Cardiac septum (tissue), 1 donor: ENCODE measurements at regions of chr19 and their contacts with region 1.

Region 1: DNA sequence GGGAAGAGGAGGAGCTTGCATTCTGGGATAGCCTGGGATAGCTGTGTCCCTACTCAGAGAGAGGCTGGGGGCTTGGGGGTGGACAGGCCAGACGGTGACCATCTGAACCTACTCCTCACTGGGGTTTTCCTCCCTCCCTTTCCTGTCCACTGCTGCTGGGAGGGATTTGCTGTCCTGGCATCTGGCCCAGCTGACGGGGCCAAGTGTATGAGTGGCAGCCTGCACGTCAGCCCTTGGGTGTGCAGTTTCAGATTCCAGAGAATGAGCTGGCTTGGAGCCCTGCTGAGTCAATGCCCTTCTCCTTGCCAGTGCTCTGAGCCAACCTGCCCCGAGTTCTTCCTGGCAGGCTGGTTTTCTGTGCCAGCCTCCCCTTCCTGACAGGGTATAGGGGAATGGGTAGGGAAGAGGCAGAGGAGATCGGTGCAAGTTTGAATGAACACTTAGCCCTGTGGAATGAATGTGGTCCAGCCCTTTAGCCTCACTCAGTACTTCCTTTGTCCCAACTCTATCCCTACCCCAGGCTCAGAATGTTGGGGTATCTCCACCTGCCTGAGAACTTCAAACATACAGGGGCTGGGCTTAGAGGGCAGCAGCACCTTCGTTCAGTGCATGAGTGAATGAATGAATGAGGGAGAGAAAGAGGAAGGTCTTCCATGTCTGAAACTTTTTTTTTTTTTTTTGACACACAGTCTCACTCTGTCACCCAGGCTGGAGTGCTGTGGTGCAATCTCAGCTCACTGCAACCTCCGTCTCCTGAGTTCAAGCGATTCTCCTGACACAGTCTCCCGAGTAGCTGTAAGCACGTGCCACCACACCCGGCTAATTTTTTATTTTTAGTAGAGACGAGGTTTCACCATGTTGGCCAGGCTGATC is 1.8 kb upstream of the ANGPTL4 start:
- DNase-seq: peak; percentile 94

Region 2: GRCh38 chr19:8240274-8241229 is 121.6 kb before region 1 on chr19:
- intact Hi-C with region 1: no loop called
- DNase-seq: peak; percentile 92

Region 3: DNA sequence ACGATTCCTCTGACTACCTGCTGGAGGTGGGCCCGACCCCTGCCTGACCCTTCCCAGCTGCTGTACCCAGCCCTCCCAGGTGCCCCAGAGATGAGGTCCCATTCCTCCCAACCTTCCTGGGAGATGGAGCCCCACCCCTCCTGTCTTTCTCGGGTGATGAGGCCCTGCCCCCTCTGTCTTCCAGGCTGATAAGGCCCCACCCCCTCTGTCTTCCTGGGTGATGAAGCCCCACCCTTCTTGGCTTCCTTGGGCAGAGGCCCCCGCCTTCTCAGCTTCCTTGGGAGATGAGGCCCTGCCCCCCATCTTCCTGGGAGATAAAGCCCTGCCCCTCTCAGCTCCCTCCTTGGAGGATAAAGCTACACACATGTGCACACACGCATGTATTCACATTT is 105.1 kb before region 1 on chr19:
- intact Hi-C with region 1: no loop called
- DNase-seq: no peak

Region 4: DNA sequence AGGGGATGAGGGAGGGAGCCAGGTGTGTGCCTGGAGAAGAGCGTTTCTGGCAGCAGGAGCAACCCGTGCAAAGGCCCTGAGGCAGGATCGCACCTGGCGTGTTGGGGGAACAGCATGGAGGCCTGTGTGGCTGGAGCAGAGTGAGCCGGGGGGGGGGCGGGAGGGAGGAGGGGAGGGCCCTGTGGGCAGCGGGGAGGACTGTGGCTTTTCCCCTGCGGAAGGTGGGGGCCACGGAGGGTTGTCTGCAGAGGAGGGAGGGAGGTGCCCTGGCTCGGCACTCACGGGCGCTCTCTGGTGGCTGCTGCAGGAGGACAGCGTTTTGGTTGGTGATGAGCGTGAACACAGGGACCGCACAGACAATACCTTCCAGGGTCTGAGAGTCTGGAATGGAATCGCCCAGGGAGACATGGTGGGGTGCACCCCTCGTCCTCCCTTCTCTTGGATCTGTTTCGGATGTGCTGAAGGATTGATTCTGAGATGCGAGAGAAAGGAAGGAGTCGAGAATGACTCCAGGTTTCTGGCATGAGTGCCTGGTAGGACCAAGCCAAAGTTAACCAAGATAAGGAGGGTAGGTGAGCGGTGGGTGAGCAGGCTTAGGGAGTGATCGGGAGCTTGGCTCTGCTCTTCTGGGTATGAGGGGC is 34.5 kb after region 1 on chr19:
- intact Hi-C with region 1: loop called (anchors 1 kb)
- DNase-seq: no peak